T-cell (primary cell): ENCODE measurements at regions of chr7 and their contacts with region 1.

Region 1: DNA sequence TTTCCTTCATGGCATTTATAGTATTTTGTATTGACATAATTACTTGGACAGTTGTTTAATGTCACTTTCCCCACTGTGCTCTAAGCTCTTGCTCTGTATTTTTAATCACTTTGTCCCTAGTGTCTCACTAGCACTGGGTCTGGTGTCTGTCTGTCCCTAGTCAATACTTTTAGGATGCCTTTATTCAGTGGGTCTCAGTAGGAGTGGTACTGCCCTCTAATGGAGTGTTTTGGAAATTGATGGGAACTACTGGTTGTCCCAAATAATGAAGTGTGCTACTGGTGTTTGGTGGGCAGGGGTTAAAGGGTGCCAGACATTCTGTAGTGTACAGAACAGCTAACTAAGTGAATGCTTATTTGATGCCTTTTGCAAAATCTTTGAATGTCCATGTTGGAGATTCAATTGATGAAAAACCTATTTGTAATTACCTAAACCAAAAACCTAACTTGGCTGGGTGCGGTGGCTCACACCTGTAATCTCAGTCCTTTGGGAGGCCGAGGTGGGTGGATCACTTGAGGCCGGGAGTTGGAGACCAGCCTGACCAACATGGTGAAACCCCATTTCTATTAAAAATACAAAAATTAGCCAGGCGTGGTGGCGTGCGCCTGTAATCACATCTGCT is 33.3 kb downstream of the CDK14 start:
- DNase-seq: peak in 1 of 35 experiments; percentile 12
- ATAC-seq: no peak
- H3K4me3 ChIP-seq: no peak overlapping the region
- H3K4me3 Mint-ChIP-seq: no peak overlapping the region
- H3K27ac ChIP-seq: no peak overlapping the region
- H3K27ac Mint-ChIP-seq: no peak overlapping the region
- H3K4me1 ChIP-seq: no peaks in the 10 kb centered on the region
- H3K4me1 Mint-ChIP-seq: no peaks in the 10 kb centered on the region
- H3K27me3 ChIP-seq: no peaks in the 10 kb centered on the region
- H3K27me3 Mint-ChIP-seq: peaks cover 0 to 4% of the 10 kb centered on the region in 2 donors

Region 2: DNA sequence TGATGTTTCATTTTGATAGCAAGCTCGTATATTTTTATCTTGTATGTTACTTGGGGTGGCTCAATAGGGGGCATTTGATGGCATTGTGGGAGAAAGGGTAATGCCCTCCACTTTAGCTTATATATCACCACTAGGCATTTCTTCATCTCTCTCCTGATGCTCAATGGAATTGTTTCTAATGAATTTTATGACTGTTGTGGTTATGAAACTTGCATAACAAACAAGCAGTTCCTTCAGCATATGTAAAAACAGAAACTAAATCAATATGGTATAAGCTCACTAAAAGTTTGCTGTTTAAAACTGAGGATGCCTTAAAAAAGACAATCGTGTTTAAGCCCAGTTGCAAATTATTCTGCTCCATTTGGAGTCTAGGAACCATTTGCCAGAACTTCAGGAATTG is 42.2 kb after region 1 on chr7:
- CTCF ChIA-PET with region 1: no interaction called
- POLR2A ChIA-PET with region 1: interaction called in 1 of 2 experiments, 11 read pairs
- DNase-seq: no peak
- ATAC-seq: no peak
- H3K4me3 ChIP-seq: no peak overlapping the region
- H3K4me3 Mint-ChIP-seq: no peak overlapping the region
- H3K27ac ChIP-seq: no peak overlapping the region
- H3K27ac Mint-ChIP-seq: no peak overlapping the region
- H3K4me1 ChIP-seq: no peaks in the 10 kb centered on the region
- H3K4me1 Mint-ChIP-seq: no peaks in the 10 kb centered on the region
- H3K27me3 ChIP-seq: no peaks in the 10 kb centered on the region
- H3K27me3 Mint-ChIP-seq: no peaks in the 10 kb centered on the region